ENCODE measurements at regions of chr20 and their contacts with region 1.

Region 1: DNA sequence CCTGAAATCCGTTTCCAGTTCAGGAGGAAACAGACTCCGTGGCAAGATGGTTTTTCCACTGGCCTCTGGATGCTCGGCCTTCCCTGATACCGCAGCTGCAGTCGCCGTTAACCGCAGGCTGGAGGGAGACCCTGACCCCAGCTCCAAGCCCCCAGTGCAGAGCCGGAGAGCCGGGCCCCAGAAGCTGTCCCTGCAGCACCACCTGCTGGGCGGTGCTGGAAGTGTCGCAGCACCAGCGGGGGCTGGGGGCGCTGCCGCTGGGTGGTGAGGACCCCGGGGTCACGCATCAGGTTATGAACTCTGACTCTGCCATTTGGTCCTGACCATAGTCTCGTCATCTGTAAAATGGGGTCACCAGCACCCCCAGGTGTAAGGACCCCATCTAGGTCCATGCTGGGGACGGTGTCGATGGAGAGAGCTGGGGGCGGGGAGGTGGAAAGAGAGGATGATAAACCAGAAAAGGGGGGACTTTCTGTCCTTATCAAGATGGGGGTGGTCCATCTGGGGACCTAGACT is 20.7 kb upstream of the CHRNA4 start:
- DNase-seq: no peak
- ATAC-seq: peak; percentile 88
- H3K4me3 ChIP-seq: no peak overlapping the region
- H3K27ac ChIP-seq: no peak overlapping the region
- H3K4me1 ChIP-seq: no peaks in the 10 kb centered on the region
- H3K27me3 ChIP-seq: peaks cover 15% of the 10 kb centered on the region
- CTCF ChIP-seq: peak; percentile 72
- POLR2A ChIP-seq: no peak
- RAD21 ChIP-seq: peak; percentile 77

Region 2: GRCh38 chr20:63056236-63056948 is 325.5 kb before region 1 on chr20:
- CTCF ChIA-PET with region 1: no interaction called
- POLR2A ChIA-PET with region 1: no interaction called
- dilution Hi-C with region 1: no loop called
- in situ Hi-C with region 1: no loop called
- intact Hi-C with region 1: loop called (anchors 5 kb)
- DNase-seq: no peak
- ATAC-seq: peak; percentile 88
- H3K4me3 ChIP-seq: no peak overlapping the region
- H3K27ac ChIP-seq: no peak overlapping the region
- H3K4me1 ChIP-seq: no peaks in the 10 kb centered on the region
- H3K27me3 ChIP-seq: peaks cover 32% of the 10 kb centered on the region
- CTCF ChIP-seq: peak; percentile 65
- POLR2A ChIP-seq: no peak
- RAD21 ChIP-seq: peak; percentile 47

Region 3: GRCh38 chr20:63223221-63224207 is 158.4 kb before region 1 on chr20:
- CTCF ChIA-PET with region 1: no interaction called
- POLR2A ChIA-PET with region 1: no interaction called
- dilution Hi-C with region 1: no loop called
- in situ Hi-C with region 1: no loop called
- intact Hi-C with region 1: loop called (anchors 5 kb)
- DNase-seq: peak; percentile 30
- ATAC-seq: peak; percentile 74
- H3K4me3 ChIP-seq: no peak overlapping the region
- H3K27ac ChIP-seq: no peak overlapping the region
- H3K4me1 ChIP-seq: peaks cover 10% of the 10 kb centered on the region
- H3K27me3 ChIP-seq: peaks cover 28% of the 10 kb centered on the region
- CTCF ChIP-seq: peak; percentile 65
- POLR2A ChIP-seq: 0 out of 2 replicates have a peak, but pooled peaks have one; percentile 20
- RAD21 ChIP-seq: peak; percentile 74

Region 4: GRCh38 chr20:63309261-63310071 is 72.4 kb before region 1 on chr20:
- CTCF ChIA-PET with region 1: interaction called, 30 read pairs
- POLR2A ChIA-PET with region 1: no interaction called
- dilution Hi-C with region 1: no loop called
- in situ Hi-C with region 1: no loop called
- intact Hi-C with region 1: loop called (anchors 1 kb)
- DNase-seq: peak; percentile 24
- ATAC-seq: peak; percentile 73
- H3K4me3 ChIP-seq: no peak overlapping the region
- H3K27ac ChIP-seq: no peak overlapping the region
- H3K4me1 ChIP-seq: peaks cover 6% of the 10 kb centered on the region; the same call in 1 of the 2 replicates
- H3K27me3 ChIP-seq: peaks cover 22% of the 10 kb centered on the region; the same call in 1 of the 2 replicates
- CTCF ChIP-seq: peak; percentile 73
- POLR2A ChIP-seq: no peak
- RAD21 ChIP-seq: peak; percentile 64

Region 5: GRCh38 chr20:63750807-63751470 is 369.1 kb after region 1 on chr20:
- CTCF ChIA-PET with region 1: no interaction called
- POLR2A ChIA-PET with region 1: no interaction called
- dilution Hi-C with region 1: no loop called
- in situ Hi-C with region 1: no loop called
- intact Hi-C with region 1: no loop called
- DNase-seq: no peak
- ATAC-seq: no peak
- H3K4me3 ChIP-seq: no peak overlapping the region
- H3K27ac ChIP-seq: no peak overlapping the region
- H3K4me1 ChIP-seq: no peaks in the 10 kb centered on the region
- H3K27me3 ChIP-seq: no peaks in the 10 kb centered on the region
- CTCF ChIP-seq: no peak
- POLR2A ChIP-seq: no peak
- RAD21 ChIP-seq: no peak